HepG2 (cell line): ENCODE measurements at regions of chr19 and their contacts with region 1.

Region 1: DNA sequence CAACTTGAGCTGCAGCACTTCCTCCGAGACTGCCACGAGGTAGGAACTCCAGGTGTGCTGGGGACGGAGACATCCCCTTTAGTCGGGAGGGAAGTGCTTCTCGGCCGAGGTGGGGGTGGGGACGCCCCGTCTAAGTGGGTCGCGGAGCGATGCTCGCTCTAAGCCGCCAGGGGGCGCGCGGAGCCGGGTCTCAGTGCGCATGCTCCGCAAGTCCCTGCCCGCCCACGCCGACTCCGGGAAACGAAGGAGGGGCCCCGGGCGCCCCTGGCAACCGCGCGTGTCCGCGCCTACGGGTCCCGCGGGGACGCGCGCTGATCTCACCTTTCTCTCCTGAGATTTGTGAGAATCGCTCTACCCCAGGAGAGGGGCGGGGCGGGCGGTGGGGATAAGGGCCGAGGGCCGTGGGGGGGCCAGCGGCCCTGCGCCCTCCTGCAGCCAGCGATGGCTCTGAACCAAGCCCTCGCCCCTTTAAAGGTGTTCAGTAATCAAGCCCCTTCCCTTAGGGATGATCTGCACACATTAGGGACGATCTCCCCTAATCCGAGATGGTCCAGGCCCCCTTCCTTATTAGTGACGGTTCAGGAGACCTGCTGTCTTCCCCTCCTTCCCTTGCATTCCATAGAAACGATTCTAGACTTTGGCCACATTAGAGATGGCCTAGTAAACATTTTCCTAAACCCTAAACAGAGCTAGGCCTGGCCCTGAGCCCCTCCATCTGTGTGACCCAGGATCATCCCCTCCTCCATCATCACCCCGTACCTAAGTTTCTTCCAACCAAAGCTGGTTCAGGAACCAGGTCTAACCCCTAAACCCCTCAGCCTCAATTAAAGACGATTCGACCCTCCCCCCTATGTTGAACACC is 47.3 kb upstream of the SHKBP1 start:
- DNase-seq: peak; percentile 56
- ATAC-seq: peak; percentile 57
- H3K4me3 ChIP-seq: peak overlapping the region; percentile 35 to 65 (median 51)
- H3K27ac ChIP-seq: no peak overlapping the region
- H3K4me1 ChIP-seq: peaks cover 29% of the 10 kb centered on the region
- H3K27me3 ChIP-seq: no peaks in the 10 kb centered on the region; a peak in 1 of 5 replicates
- CTCF ChIP-seq: peak; percentile 95
- EP300 ChIP-seq: no peak
- POLR2A ChIP-seq: no peak
- RAD21 ChIP-seq: peak; percentile 56; the same call in 1 of the 2 replicates

Region 2: DNA sequence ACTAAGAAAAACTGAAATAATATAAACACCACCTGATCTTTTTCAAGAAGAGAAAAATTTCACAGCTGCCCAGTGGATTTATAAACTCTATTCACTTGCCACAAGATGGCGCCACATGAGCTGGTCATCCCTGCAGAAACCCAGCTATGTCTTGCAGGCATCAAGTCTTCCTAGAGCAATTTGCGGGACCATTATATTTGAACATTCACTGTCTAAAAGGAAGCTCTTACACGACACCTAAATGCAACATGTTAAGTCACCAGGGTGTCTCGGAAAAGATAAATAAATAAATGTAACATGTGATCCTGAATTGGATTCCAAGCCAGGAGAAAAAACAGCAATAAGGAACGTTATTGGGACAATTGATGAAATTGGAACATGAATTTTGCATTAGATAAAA is 223.9 kb before region 1 on chr19:
- CTCF ChIA-PET with region 1: no interaction called
- POLR2A ChIA-PET with region 1: no interaction called
- in situ Hi-C with region 1: no loop called
- intact Hi-C with region 1: loop called (anchors 10 kb)
- DNase-seq: peak; percentile 78
- ATAC-seq: peak; percentile 64
- H3K4me3 ChIP-seq: no peak overlapping the region
- H3K27ac ChIP-seq: no peak overlapping the region
- H3K4me1 ChIP-seq: no peaks in the 10 kb centered on the region
- H3K27me3 ChIP-seq: no peaks in the 10 kb centered on the region
- CTCF ChIP-seq: peak; percentile 76
- EP300 ChIP-seq: no peak
- POLR2A ChIP-seq: no peak
- RAD21 ChIP-seq: peak; percentile 67; the same call in 1 of the 2 replicates

Region 3: DNA sequence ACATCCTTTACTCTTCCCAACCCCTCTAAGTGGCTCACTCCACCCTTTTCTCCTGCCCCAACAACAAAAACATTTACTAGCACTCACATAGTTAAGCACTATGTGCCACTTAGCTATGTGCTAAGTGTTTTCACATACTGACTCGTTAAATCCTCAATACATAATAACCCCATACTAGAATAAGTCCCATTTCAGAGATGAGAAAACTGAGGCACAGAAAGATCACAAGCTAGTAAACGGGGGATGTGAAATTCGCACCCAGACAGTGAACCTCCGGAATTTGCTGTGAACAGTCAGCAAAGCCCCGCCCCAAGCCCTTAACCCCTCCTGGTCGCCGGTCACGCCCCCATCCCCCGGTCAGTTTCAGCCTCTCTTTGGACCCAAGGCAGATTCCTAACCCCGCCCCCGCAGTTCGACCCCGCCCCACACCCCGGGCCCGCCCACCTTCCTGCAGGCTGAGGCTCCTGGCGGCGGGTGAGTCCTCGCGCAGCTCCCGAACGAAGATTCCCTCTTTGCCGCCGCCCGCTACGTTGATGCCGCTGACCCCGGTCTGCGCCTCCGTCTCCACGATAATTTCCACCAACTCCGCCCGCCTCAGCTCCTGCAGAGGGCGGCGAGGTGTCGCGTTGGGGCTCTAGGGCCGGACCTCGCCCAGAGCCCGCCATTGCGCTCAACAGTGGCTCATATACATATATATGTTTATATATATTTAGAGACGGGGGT is 125.9 kb before region 1 on chr19:
- CTCF ChIA-PET with region 1: no interaction called
- POLR2A ChIA-PET with region 1: no interaction called
- in situ Hi-C with region 1: no loop called
- intact Hi-C with region 1: no loop called
- DNase-seq: peak; percentile 84
- ATAC-seq: peak; percentile 91
- H3K4me3 ChIP-seq: peak overlapping the region; percentile 54 to 73 (median 70); a peak in 5 of 6 replicates
- H3K27ac ChIP-seq: peak overlapping the region; percentile 50
- H3K4me1 ChIP-seq: peaks cover 21% of the 10 kb centered on the region
- H3K27me3 ChIP-seq: peaks cover 2 to 4% of the 10 kb centered on the region in 2 experiments; a peak in 1 of 5 replicates
- CTCF ChIP-seq: 0 out of 2 replicates have a peak, but pooled peaks have one; percentile 3
- EP300 ChIP-seq: no peak
- POLR2A ChIP-seq: peak in 1 of 2 experiments; percentile 52; a peak in 1 of 4 replicates
- RAD21 ChIP-seq: no peak

Region 4: DNA sequence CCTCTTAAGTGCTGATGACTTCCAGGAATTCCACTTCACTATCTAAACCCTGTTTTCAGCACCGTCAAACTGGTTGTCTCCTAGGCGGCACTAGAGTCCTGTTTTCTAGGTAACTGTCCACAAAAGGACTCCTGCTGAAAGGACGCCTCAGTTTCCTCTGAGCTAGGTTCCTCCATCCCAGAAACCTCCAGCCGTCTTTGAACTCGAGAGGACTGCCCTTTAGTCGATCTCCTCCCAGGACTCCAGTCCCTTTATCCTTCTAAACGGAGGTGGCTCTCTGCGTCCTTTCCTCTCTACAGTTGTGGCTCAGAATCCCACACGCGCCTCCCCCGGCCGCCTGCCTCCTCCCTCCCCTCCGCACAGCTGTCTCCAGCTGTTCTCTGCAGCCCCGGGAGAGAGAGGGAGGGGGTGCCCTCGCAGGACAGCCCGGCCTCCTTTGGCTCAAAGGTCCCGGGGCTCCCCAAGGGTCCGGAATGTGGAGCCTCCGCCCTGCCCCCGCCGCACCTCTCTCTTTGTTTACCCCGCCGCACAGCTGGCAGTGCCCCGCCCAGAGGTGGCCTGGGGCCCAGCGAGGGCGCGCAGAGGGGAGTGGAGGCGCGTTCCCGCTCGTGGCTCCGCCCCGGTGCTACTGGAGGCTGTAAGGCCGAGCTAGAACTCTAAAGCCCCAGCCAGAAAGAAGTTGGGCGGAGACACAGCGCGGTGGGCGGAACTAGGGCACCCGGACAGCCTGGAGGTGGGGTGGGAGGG is 74.2 kb after region 1 on chr19:
- CTCF ChIA-PET with region 1: no interaction called
- POLR2A ChIA-PET with region 1: no interaction called
- in situ Hi-C with region 1: loop called (anchors 5 kb)
- intact Hi-C with region 1: loop called (anchors 5 kb)
- DNase-seq: peak; percentile 96
- ATAC-seq: peak; percentile 79
- H3K4me3 ChIP-seq: peak overlapping the region; percentile 9 to 63 (median 39); a peak in 4 of 6 replicates
- H3K27ac ChIP-seq: peak overlapping the region; percentile 39
- H3K4me1 ChIP-seq: peaks cover 73% of the 10 kb centered on the region
- H3K27me3 ChIP-seq: peaks cover 6 to 62% of the 10 kb centered on the region in 2 experiments; a peak in 3 of 5 replicates
- CTCF ChIP-seq: peak; percentile 39; the same call in 1 of the 2 replicates
- EP300 ChIP-seq: peak; percentile 52 to 74; a peak in 2 of 4 replicates
- POLR2A ChIP-seq: no peak
- RAD21 ChIP-seq: peak; percentile 45